Caco-2 (cell line): ENCODE measurements at regions of chr1 and their contacts with region 1.

Region 1: DNA sequence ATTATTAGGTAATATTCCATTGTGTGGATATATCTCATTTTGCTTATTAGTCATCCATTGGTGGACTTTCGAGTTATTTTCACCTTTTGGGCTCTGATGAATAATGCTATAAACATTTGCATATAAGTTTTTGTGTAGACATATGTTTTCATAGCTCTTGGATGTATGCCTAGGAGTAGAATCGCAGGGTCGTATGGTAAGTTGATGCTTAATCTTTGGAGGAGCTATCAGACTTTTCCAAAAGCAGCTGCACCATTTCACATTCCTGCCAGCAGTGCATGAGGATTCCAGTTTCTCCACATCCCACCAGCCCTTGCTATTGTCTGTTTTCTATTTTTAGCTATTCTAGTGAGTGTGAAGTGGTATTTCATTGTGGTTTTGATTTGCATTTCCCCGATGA is 120.3 kb upstream of the TMEM51 start:
- DNase-seq: no peak
- H3K4me3 ChIP-seq: no peak overlapping the region
- H3K4me3 Mint-ChIP-seq: no peak overlapping the region
- H3K27ac Mint-ChIP-seq: no peak overlapping the region
- H3K4me1 ChIP-seq: no peaks in the 10 kb centered on the region
- H3K4me1 Mint-ChIP-seq: peaks cover 3% of the 10 kb centered on the region
- H3K27me3 ChIP-seq: no peaks in the 10 kb centered on the region
- H3K27me3 Mint-ChIP-seq: no peaks in the 10 kb centered on the region
- CTCF ChIP-seq: no peak

Region 2: GRCh38 chr1:13965770-13966398 is 1067.4 kb before region 1 on chr1:
- CTCF ChIA-PET with region 1: no interaction called
- POLR2A ChIA-PET with region 1: no interaction called
- intact Hi-C with region 1: loop called (anchors 5 kb)
- DNase-seq: peak; percentile 46 to 55
- H3K4me3 ChIP-seq: no peak overlapping the region
- H3K4me3 Mint-ChIP-seq: no peak overlapping the region
- H3K27ac Mint-ChIP-seq: no peak overlapping the region
- H3K4me1 ChIP-seq: no peaks in the 10 kb centered on the region
- H3K4me1 Mint-ChIP-seq: no peaks in the 10 kb centered on the region
- H3K27me3 ChIP-seq: no peaks in the 10 kb centered on the region
- H3K27me3 Mint-ChIP-seq: peaks cover 7% of the 10 kb centered on the region
- CTCF ChIP-seq: peak; percentile 53 to 58